Activated naive CD4-positive, alpha-beta T cell treated with anti-CD3 and anti-CD28 coated beads, Interleukin-2, amount 10 ng/mL, durations not matched to agents 7 days and 5 days (primary cell): ENCODE measurements at regions of chr14 and their contacts with region 1.

Region 1: GRCh38 chr14:106556665-106557289 is 1030.4 kb downstream of the TMEM121 start:
- DNase-seq: peak; percentile 81
- H3K4me3 Mint-ChIP-seq: no peak overlapping the region
- H3K27ac Mint-ChIP-seq: no peak overlapping the region
- H3K4me1 Mint-ChIP-seq: no peaks in the 10 kb centered on the region
- H3K27me3 Mint-ChIP-seq: peaks cover 30% of the 10 kb centered on the region

Region 2: DNA sequence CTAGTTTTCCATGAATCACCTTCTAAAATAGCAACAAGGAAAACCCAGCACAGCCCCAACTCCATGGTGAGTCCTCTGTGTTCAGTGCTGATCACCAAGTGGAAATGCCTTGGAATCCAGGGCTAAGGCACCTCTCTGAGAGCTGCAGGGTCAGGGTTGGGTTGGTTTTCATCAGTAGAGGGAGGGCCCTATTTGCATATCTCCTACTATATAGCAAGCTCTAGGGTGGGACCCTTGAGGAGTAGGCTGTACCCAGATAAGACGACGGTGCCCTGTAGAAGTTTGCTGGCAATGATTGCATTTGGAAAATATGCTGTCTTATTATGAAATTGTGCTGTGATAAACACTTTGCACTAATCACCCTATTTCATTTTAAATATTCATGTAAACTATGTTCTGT is 18.6 kb before region 1 on chr14:
- CTCF ChIA-PET with region 1: interaction called, 14 read pairs
- DNase-seq: no peak
- H3K4me3 Mint-ChIP-seq: no peak overlapping the region
- H3K27ac Mint-ChIP-seq: no peak overlapping the region
- H3K4me1 Mint-ChIP-seq: peaks cover 13% of the 10 kb centered on the region
- H3K27me3 Mint-ChIP-seq: peaks cover 47% of the 10 kb centered on the region